ENCODE measurements at regions of chr12 and their contacts with region 1.

Region 1: GRCh38 chr12:6230321-6231110 is 30.3 kb downstream of the CD9 start:
- DNase-seq: peak; percentile 68
- H3K4me3 ChIP-seq: no peak overlapping the region
- H3K27ac ChIP-seq: peak overlapping the region; percentile 92
- H3K4me1 ChIP-seq: peaks cover 80% of the 10 kb centered on the region
- H3K27me3 ChIP-seq: no peaks in the 10 kb centered on the region
- CTCF ChIP-seq: no peak

Region 2: DNA sequence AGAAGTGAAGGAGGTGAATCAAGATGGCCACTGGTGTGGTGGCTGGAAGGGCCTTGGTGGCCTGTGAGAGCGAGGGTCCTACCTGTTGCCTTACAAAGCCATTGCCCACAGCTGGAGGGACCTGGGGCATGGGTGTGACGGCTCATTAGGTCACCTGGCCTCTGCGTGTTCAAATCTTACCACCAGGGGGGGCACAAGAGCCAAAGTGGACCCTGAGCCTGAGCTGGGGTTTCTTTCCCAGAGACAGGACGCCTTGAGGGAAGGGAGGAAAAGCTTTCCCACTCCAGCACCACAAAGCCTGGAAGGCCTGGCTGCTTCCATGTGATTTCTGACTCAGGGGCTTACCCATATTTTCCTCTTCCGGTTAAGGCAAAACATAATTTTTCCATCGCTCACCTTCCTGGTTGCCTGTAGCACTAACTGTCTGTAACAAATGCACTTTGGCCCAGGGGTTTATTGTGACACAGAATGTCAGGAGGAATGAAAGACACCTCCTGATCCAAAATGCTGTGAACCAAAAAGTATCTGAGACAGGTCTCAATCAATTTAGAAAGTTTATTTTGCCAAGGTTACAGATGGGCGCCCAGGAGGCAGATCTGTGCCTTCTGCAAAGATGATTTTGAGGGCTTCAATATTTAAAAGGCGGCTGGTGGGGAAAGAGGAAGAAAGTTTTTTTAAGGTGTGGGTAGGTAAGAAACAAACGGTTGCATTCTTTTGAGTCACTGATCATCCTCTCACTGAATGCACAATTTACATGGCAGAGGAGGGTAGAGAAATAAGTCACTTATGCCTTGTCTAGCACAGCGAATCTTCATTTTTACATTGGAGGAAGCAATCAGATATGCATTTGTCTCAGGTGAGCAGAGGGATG is 34.6 kb before region 1 on chr12:
- intact Hi-C with region 1: loop called (anchors 2 kb)
- DNase-seq: peak; percentile 96
- H3K4me3 ChIP-seq: no peak overlapping the region
- H3K27ac ChIP-seq: peak overlapping the region; percentile 64
- H3K4me1 ChIP-seq: peaks cover 10% of the 10 kb centered on the region
- H3K27me3 ChIP-seq: no peaks in the 10 kb centered on the region
- CTCF ChIP-seq: peak; percentile 88

Region 3: DNA sequence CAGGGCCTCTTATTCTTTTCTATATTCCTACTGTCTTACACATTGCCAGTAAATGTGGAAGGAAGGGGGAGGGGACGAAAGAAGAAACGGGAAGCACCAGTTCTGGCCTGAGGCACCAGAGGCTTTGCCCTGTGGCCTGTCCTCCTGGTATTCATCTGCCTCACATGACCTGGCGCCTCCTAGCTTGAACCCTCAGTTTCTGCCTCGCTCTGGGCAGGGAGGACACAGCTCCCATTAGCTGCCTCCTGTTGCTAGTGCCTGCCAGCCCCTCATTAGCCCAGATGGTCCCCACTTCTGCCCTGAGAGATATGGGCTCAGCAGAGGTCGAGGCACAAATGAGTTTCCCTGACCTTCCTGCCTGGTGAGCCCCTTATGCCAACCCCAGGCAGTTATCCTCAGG is 77.0 kb after region 1 on chr12:
- intact Hi-C with region 1: no loop called
- DNase-seq: no peak
- H3K4me3 ChIP-seq: no peak overlapping the region
- H3K27ac ChIP-seq: no peak overlapping the region
- H3K4me1 ChIP-seq: peaks cover 4% of the 10 kb centered on the region
- H3K27me3 ChIP-seq: no peaks in the 10 kb centered on the region
- CTCF ChIP-seq: no peak

Region 4: DNA sequence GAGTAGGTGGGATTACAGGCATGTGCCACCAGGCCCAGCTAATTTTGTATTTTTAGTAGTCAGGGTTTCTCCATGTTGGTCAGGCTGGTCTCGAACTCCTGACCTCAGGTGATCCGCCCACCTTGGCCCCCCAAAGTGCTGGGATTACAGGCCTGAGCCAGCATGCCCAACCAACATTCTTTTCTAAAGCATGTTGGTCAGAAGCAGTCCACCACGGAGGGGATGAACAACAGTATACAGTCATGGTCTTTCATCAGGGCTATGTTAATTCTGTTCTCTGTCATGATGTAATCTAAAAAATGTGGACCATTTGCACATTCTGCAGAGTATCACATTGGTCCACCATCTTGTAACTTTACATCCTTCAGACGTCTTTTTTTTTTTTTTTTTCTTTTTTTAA is 258.9 kb after region 1 on chr12:
- intact Hi-C with region 1: no loop called
- DNase-seq: no peak
- H3K4me3 ChIP-seq: no peak overlapping the region
- H3K27ac ChIP-seq: no peak overlapping the region
- H3K4me1 ChIP-seq: peaks cover 3% of the 10 kb centered on the region
- H3K27me3 ChIP-seq: no peaks in the 10 kb centered on the region
- CTCF ChIP-seq: no peak

Measured in colonic mucosa (tissue), 4 donors.